Posterior vena cava (tissue), 2 donors: ENCODE measurements at regions of chr19 and their contacts with region 1.

Region 1: GRCh38 chr19:1082172-1082927 is 12.8 kb downstream of the POLR2E start:
- DNase-seq: peak; percentile 85

Region 2: GRCh38 chr19:1045247-1045603 is 37.1 kb before region 1 on chr19:
- intact Hi-C with region 1: loop called in 1 of 2 experiments (anchors 5 kb)
- DNase-seq: no peak